ENCODE measurements at regions of chr10 and their contacts with region 1.

Region 1: GRCh38 chr10:91163269-91163868 is 57.1 kb upstream of the PCGF5 start:
- DNase-seq: peak; percentile 59 to 94 (median 90)
- ATAC-seq: peak; percentile 62 to 76 (median 66)
- H3K4me3 ChIP-seq: peak overlapping the region; percentile 66 to 74
- H3K4me3 Mint-ChIP-seq: peak overlapping the region; percentile 87 to 91 (median 90)
- H3K27ac ChIP-seq: peak overlapping the region; percentile 90
- H3K27ac Mint-ChIP-seq: peak overlapping the region; percentile 93 to 94
- H3K4me1 ChIP-seq: peaks cover 3 to 16% of the 10 kb centered on the region in 2 experiments
- H3K4me1 Mint-ChIP-seq: peaks cover 55 to 60% (median 58%) of the 10 kb centered on the region in 3 donors
- H3K27me3 ChIP-seq: no peaks in the 10 kb centered on the region
- H3K27me3 Mint-ChIP-seq: no peaks in the 10 kb centered on the region

Region 2: DNA sequence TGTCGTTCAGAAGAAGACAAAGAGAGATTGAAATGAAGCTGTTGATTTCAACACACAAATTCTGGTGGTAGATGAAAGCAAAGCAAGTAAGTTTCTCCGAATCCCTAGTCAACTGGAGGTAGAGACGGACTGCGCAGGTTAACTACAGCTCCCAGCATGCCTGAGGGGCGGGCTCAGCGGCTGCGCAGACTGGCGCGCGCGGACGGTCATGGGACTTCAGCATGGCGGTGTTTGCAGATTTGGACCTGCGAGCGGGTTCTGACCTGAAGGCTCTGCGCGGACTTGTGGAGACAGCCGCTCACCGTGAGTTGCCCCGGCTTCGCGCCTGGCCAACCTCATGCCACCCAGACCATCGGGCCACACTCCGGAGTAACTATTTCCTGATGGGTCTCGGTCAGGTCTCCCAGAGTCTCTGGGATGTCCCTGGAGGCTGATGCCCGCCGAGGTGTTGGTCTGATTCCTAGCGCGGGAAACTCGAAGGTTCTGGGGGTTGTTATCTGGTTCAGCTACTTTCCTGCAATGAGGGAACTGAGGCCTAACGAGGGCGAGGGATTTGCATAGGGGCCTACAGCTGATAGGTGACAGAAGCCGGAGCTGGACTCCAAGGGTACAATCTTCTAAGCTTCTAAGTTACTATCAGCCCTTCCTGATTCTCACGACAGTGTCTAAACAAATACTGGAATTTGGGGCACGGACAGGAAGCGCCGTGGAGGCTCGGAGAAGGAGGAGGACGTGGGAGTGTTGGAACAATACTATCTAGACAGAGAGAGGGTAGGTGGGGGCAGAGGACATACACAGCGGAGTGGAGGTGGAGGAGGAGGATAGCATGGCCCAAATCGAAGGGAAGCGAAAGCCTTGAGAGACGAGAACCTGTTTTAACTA is 291.4 kb before region 1 on chr10 and contains the start of gene RPP30:
- CTCF ChIA-PET with region 1: no interaction called
- POLR2A ChIA-PET with region 1: interaction called in 1 of 2 experiments, 10 read pairs
- DNase-seq: peak; percentile 58 to 85 (median 75)
- ATAC-seq: peak; percentile 99 to 100 (median 99)
- H3K4me3 ChIP-seq: peak within 1 kb of the TSS; percentile 71 to 95
- H3K4me3 Mint-ChIP-seq: peak within 1 kb of the TSS; percentile 97 to 99 (median 99)
- H3K27ac ChIP-seq: peak within 1 kb of the TSS; percentile 54
- H3K27ac Mint-ChIP-seq: peak within 1 kb of the TSS; percentile 73 to 91
- H3K4me1 ChIP-seq: peaks cover 12 to 16% of the 10 kb centered on the region in 2 experiments
- H3K4me1 Mint-ChIP-seq: peaks cover 39 to 45% (median 40%) of the 10 kb centered on the region in 3 donors
- H3K27me3 ChIP-seq: peaks cover 2 to 4% of the 10 kb centered on the region in 2 experiments
- H3K27me3 Mint-ChIP-seq: peaks cover 23 to 32% of the 10 kb centered on the region in 2 donors
- total RNA-seq, gene RPP30: 24.8 to 33.7 (median 26.9) TPM

Region 3: DNA sequence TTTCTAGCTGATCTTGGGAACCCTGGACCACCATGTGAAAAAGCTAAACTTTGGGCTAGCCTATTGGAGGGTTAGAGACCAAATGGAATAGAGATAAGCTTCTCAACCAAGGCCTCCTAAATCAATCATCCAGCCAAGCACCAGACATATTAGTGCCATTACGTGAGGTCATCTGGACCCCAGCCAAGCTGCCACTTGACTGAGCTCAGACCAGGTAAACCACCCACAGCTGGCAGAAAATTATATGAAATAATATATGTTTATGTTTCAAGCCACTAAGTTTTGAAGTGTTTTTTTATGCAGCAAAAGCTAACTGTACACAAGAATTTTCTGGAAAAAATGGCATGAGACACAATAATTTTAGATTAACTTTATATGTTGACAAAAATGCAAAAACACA is 25.5 kb before region 1 on chr10:
- CTCF ChIA-PET with region 1: no interaction called
- POLR2A ChIA-PET with region 1: no interaction called
- DNase-seq: no peak
- ATAC-seq: no peak
- H3K4me3 ChIP-seq: no peak overlapping the region
- H3K4me3 Mint-ChIP-seq: no peak overlapping the region
- H3K27ac ChIP-seq: no peak overlapping the region
- H3K27ac Mint-ChIP-seq: no peak overlapping the region
- H3K4me1 ChIP-seq: no peaks in the 10 kb centered on the region
- H3K4me1 Mint-ChIP-seq: peaks cover 2 to 10% (median 9%) of the 10 kb centered on the region in 3 donors
- H3K27me3 ChIP-seq: peaks cover 0 to 13% of the 10 kb centered on the region in 2 experiments
- H3K27me3 Mint-ChIP-seq: peaks cover 0 to 3% of the 10 kb centered on the region in 2 donors

Region 4: DNA sequence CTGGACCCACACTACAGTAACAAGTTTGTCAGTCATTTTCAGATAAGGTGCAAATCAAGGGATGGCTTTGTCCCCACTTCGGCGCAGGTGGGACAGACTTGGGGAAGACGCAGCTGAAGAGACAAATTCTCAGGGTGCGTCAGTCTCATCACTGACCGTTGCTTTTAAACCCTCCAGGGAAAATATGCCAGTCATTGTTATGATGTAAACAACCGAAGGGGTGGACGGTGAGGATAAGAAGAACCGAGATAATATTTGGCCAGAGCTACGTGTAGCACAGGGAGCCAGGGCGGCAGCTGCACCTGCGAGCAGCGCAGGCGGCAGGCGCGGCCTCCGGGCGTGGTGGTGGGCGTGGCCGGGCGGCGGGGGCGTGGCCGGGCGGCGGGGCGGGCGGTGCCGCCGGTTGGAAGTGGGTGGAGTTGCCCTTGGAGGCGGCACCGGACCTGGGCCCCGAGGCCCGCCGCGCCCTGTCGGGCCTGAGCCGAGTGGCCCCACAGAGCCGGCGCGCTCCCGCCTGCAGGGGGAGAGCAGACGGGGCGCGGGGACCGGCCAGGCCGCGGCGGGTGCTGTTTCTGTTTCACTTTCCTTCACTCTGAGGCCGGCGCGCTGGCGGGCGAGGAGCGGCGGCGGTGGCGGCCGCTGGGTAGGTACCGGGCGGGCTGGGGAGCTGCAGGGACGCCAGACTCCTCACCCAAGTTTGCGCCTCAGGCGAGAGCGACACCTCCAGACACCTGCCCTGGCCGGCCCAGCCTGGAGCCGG is 57.0 kb after region 1 on chr10 and contains the start of gene PCGF5:
- CTCF ChIA-PET with region 1: interaction called in 1 of 2 experiments, 8 read pairs
- POLR2A ChIA-PET with region 1: interaction called in 1 of 2 experiments, 10 read pairs
- DNase-seq: peak; percentile 75 to 94 (median 87)
- ATAC-seq: peak; percentile 95 to 98 (median 96)
- H3K4me3 ChIP-seq: peak within 1 kb of the TSS; percentile 58 to 84
- H3K4me3 Mint-ChIP-seq: peak within 1 kb of the TSS; percentile 86 to 88 (median 86)
- H3K27ac ChIP-seq: peak within 1 kb of the TSS; percentile 60
- H3K27ac Mint-ChIP-seq: peak within 1 kb of the TSS; percentile 80 to 91
- H3K4me1 ChIP-seq: peaks cover 9 to 24% of the 10 kb centered on the region in 2 experiments
- H3K4me1 Mint-ChIP-seq: peaks cover 43 to 66% (median 65%) of the 10 kb centered on the region in 3 donors
- H3K27me3 ChIP-seq: no peaks in the 10 kb centered on the region
- H3K27me3 Mint-ChIP-seq: no peaks in the 10 kb centered on the region
- total RNA-seq, gene PCGF5: 48.9 to 73.1 (median 59.4) TPM